Breast epithelium (tissue), 4 donors: ENCODE measurements at regions of chr10 and their contacts with region 1.

Region 1: GRCh38 chr10:1335642-1336041 is 279.5 kb downstream of the WDR37 start:
- DNase-seq: no peak
- H3K4me3 ChIP-seq: no peak overlapping the region
- H3K27ac ChIP-seq: no peak overlapping the region
- H3K4me1 ChIP-seq: no peaks in the 10 kb centered on the region
- H3K27me3 ChIP-seq: peaks cover 0 to 7% of the 10 kb centered on the region in 2 donors
- CTCF ChIP-seq: no peak
- POLR2A ChIP-seq: no peak

Region 2: GRCh38 chr10:2207246-2207922 is 871.7 kb after region 1 on chr10:
- intact Hi-C with region 1: loop called (anchors 5 kb)
- DNase-seq: no peak
- H3K4me3 ChIP-seq: no peak overlapping the region
- H3K27ac ChIP-seq: no peak overlapping the region
- H3K4me1 ChIP-seq: no peaks in the 10 kb centered on the region
- H3K27me3 ChIP-seq: no peaks in the 10 kb centered on the region
- CTCF ChIP-seq: no peak
- POLR2A ChIP-seq: no peak